Dorsolateral prefrontal cortex (tissue), 120 donors: ENCODE measurements at regions of chr3 and their contacts with region 1.

Region 1: GRCh38 chr3:39724233-39724846 is 85.1 kb upstream of the MYRIP start:
- DNase-seq: peak in 1 of 10 donors; percentile 11
- H3K4me3 ChIP-seq: no peak overlapping the region
- H3K27ac ChIP-seq: no peak overlapping the region
- H3K27me3 ChIP-seq: no peaks in the 10 kb centered on the region
- CTCF ChIP-seq: peak in 49 of 56 donors; percentile 11 to 73 (median 41)

Region 2: GRCh38 chr3:39651993-39652739 is 72.2 kb before region 1 on chr3:
- intact Hi-C with region 1: no loop called
- DNase-seq: no peak
- H3K4me3 ChIP-seq: no peak overlapping the region
- H3K27ac ChIP-seq: peak overlapping the region in 23 of 59 donors; percentile 4 to 63 (median 32)
- H3K27me3 ChIP-seq: no peaks in the 10 kb centered on the region
- CTCF ChIP-seq: no peak

Region 3: DNA sequence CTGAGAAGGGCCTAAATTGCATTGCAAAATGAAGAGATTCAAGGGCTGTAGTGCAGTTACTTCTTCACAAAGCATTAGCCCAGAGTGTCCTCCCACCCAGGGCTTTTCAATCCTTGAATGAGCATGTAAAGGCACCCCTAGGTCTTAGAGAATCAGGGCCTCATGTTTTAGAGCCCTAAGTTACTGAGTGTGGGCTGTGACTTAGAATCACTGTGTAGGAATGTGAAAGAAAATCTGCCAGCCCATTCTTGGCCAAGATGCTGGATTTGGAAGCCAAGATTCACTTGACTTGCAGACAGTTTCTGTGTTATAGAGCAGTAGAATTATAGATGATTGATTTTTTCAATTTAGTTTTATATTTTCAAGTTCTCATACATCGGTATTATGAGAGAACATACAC is 238.2 kb after region 1 on chr3:
- intact Hi-C with region 1: loop called in 1 of 2 experiments (anchors 10 kb)
- DNase-seq: peak in 1 of 10 donors; percentile 30
- H3K4me3 ChIP-seq: no peak overlapping the region
- H3K27ac ChIP-seq: peak overlapping the region in 41 of 59 donors; percentile 2 to 81 (median 55)
- H3K27me3 ChIP-seq: no peaks in the 10 kb centered on the region
- CTCF ChIP-seq: no peak